Dorsolateral prefrontal cortex (tissue), 120 donors: ENCODE measurements at regions of chr13 and their contacts with region 1.

Region 1: GRCh38 chr13:25375727-25376358 is 4.1 kb downstream of the ATP8A2 start:
- DNase-seq: peak in 1 of 10 donors; percentile 37
- H3K4me3 ChIP-seq: no peak overlapping the region
- H3K27ac ChIP-seq: no peak overlapping the region
- H3K27me3 ChIP-seq: peaks cover 0 to 13% (median 0%) of the 10 kb centered on the region in 45 donors
- CTCF ChIP-seq: peak; percentile 48 to 77 (median 68)

Region 2: DNA sequence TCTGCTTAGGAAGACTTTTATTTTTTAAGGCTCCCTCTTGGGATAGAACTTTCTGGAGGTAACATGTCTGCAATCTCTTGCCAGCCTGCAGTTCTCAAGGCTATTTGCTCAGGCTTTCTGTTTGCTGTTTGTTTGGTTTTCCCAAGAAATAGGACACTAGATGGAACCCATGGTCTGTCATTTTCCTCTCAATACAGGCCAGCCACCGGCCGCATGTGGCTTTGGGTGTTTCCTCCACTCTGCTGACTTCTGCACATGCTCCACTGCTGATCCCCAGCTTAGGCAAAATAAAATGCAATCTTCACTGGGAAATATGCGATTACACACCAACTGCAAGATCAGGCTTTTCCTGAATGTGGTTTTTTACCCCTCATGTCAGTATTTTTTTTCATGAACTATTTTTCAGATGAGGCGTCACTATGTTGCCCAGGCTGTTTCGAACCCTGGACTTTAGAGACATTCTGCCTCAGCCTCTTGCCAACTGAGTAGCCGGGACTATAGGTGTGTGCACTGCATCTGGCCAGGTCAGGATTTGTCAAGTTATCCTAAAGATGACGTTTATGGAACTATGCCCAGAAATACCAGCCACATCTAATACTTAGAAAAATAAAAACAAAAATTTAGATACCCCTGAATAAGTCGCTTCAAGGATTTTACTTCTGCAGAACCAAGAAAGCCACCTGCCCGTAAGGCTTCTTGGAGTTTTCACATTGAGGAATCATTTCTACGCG is 374.2 kb before region 1 on chr13:
- intact Hi-C with region 1: loop called in 1 of 2 experiments (anchors 5 kb)
- DNase-seq: no peak
- H3K4me3 ChIP-seq: no peak overlapping the region
- H3K27ac ChIP-seq: no peak overlapping the region
- H3K27me3 ChIP-seq: peaks cover 0 to 7% (median 0%) of the 10 kb centered on the region in 45 donors
- CTCF ChIP-seq: no peak

Region 3: GRCh38 chr13:25137637-25138115 is 238.2 kb before region 1 on chr13:
- intact Hi-C with region 1: loop called in 1 of 2 experiments (anchors 10 kb)
- DNase-seq: no peak
- H3K4me3 ChIP-seq: peak overlapping the region in 45 of 59 donors; percentile 5 to 50 (median 27)
- H3K27ac ChIP-seq: peak overlapping the region in 46 of 59 donors; percentile 4 to 85 (median 62)
- H3K27me3 ChIP-seq: no peaks in the 10 kb centered on the region
- CTCF ChIP-seq: peak in 1 of 56 donors; percentile 6

Region 4: DNA sequence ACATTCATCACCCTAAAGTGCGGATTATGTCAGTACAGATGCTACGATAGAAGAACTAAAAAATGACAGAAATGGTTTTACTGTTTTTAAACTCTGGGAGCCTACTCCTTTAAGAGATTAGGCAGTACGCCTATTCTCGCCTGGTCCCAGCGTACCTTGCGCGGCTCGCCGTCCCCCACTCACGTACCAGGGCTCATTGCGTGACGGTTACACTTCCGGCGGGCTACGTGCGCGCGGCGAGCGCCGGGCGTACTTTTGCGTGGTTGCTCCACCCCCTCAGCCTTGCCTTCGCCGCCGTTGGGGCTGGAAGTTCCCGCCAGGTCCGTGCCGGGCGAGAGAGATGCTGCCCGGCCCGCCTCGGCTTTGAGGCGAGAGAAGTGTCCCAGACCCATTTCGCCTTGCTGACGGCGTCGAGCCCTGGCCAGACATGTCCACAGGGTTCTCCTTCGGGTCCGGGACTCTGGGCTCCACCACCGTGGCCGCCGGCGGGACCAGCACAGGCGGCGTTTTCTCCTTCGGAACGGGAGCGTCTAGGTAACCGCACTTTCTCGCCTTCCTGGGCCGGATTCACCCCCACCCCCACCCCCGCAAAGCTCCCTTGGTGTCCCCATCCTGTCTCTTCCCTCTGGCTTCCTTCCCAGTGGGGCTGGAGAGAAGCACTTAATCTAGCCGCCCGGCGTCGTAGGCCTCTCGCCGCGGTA is 74.3 kb before region 1 on chr13 and contains the start of gene NUP58:
- intact Hi-C with region 1: loop called (anchors 5 kb)
- DNase-seq: peak; percentile 95 to 98 (median 96)
- H3K4me3 ChIP-seq: peak within 1 kb of the TSS; percentile 59 to 99 (median 89)
- H3K27ac ChIP-seq: peak within 1 kb of the TSS; percentile 77 to 98 (median 93)
- H3K27me3 ChIP-seq: no peaks in the 10 kb centered on the region
- CTCF ChIP-seq: peak in 42 of 56 donors; percentile 5 to 65 (median 33)
- total RNA-seq, gene NUP58: 37.0 to 77.1 (median 58.6) TPM

Region 5: GRCh38 chr13:25574437-25575411 is 198.9 kb after region 1 on chr13:
- intact Hi-C with region 1: loop called in 1 of 2 experiments (anchors 2 kb)
- DNase-seq: peak; percentile 48 to 93 (median 84)
- H3K4me3 ChIP-seq: no peak overlapping the region
- H3K27ac ChIP-seq: no peak overlapping the region
- H3K27me3 ChIP-seq: no peaks in the 10 kb centered on the region
- CTCF ChIP-seq: peak; percentile 31 to 98 (median 92)

Region 6: GRCh38 chr13:25645681-25646080 is 269.8 kb after region 1 on chr13:
- intact Hi-C with region 1: no loop called
- DNase-seq: no peak
- H3K4me3 ChIP-seq: no peak overlapping the region
- H3K27ac ChIP-seq: no peak overlapping the region
- H3K27me3 ChIP-seq: no peaks in the 10 kb centered on the region
- CTCF ChIP-seq: no peak